Right ventricle myocardium inferior (tissue), 1 donor: ENCODE measurements at regions of chr13 and their contacts with region 1.

Region 1: GRCh38 chr13:76903544-76904162 is 17.4 kb upstream of the KCTD12 start:
- DNase-seq: peak; percentile 72
- ATAC-seq: peak; percentile 86

Region 2: GRCh38 chr13:75691183-75691582 is 1212.5 kb before region 1 on chr13:
- intact Hi-C with region 1: loop called (anchors 5 kb)
- DNase-seq: no peak
- ATAC-seq: no peak

Region 3: GRCh38 chr13:75870397-75870903 is 1033.2 kb before region 1 on chr13:
- intact Hi-C with region 1: loop called (anchors 1 kb)
- DNase-seq: no peak
- ATAC-seq: no peak

Region 4: GRCh38 chr13:76667551-76667950 is 236.1 kb before region 1 on chr13:
- intact Hi-C with region 1: loop called (anchors 2 kb)
- DNase-seq: no peak
- ATAC-seq: peak; percentile 51

Region 5: DNA sequence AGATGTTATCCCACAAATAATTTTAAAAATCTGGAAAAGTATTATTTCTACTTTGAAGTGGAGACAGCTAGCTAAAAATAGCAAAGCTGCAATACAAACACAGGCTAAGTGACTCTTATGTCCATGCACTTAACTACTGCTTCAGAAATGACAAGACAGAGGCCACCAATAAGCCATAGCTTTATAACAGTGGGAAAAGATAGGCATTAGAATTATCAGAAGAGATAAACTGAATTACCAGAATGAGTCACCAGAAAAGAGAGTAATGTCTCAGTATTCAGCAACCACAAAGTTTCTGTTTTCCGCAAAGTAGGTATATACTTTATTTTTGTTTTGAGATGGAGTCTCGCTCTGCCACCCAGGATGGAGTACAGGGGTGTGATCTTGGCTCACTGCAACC is 105.4 kb after region 1 on chr13:
- intact Hi-C with region 1: no loop called
- DNase-seq: no peak
- ATAC-seq: peak; percentile 59

Region 6: GRCh38 chr13:77084755-77085154 is 181.1 kb after region 1 on chr13:
- intact Hi-C with region 1: no loop called
- DNase-seq: no peak
- ATAC-seq: no peak